ENCODE measurements at regions of chr12 and their contacts with region 1.

Region 1: GRCh38 chr12:118404876-118405521 is 28.6 kb downstream of the SUDS3 start:
- DNase-seq: peak; percentile 73
- H3K4me3 Mint-ChIP-seq: no peak overlapping the region
- H3K27ac Mint-ChIP-seq: no peak overlapping the region
- H3K4me1 Mint-ChIP-seq: no peaks in the 10 kb centered on the region
- H3K27me3 Mint-ChIP-seq: no peaks in the 10 kb centered on the region
- CTCF ChIP-seq: peak; percentile 79

Region 2: DNA sequence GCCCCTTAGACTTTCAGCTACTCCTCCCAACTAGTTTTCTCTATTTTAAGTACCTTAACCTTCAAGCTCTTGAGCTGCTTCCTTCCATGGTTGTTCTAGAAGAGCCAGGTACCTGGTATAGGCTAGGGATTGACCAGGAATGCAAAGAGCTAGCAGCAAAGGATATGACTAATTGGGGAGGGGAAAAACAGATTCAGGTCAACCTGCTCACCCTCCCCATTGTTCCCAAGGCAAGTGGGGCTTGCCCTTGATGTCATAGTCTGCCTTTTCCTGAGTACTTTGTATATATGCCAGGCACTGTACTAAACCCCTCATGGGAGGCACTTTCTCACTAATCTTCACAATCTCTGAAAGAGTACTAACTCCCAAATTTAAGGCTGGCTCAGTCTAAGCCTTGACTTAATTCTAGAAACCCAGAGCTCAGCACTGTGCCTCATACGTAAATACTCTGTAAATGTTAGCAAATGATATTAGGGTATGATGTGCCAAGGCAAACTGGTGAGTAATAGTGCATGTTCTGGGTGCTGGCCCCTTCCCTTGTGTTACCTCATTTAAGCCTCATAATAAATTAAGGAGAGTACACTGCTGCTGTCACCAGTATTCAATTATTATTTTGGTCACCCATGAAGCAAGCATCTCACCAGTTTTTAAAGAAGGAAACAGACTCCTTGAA is 13.5 kb after region 1 on chr12:
- CTCF ChIA-PET with region 1: interaction called, 15 read pairs
- POLR2A ChIA-PET with region 1: no interaction called
- intact Hi-C with region 1: no loop called
- DNase-seq: peak; percentile 50
- H3K4me3 Mint-ChIP-seq: no peak overlapping the region
- H3K27ac Mint-ChIP-seq: peak overlapping the region; percentile 49
- H3K4me1 Mint-ChIP-seq: peaks cover 15% of the 10 kb centered on the region
- H3K27me3 Mint-ChIP-seq: no peaks in the 10 kb centered on the region
- CTCF ChIP-seq: no peak

Region 3: GRCh38 chr12:118625050-118625675 is 220.2 kb after region 1 on chr12:
- CTCF ChIA-PET with region 1: interaction called, 4 read pairs
- POLR2A ChIA-PET with region 1: no interaction called
- intact Hi-C with region 1: loop called (anchors 1 kb)
- DNase-seq: no peak
- H3K4me3 Mint-ChIP-seq: no peak overlapping the region
- H3K27ac Mint-ChIP-seq: no peak overlapping the region
- H3K4me1 Mint-ChIP-seq: no peaks in the 10 kb centered on the region
- H3K27me3 Mint-ChIP-seq: no peaks in the 10 kb centered on the region
- CTCF ChIP-seq: no peak

Region 4: DNA sequence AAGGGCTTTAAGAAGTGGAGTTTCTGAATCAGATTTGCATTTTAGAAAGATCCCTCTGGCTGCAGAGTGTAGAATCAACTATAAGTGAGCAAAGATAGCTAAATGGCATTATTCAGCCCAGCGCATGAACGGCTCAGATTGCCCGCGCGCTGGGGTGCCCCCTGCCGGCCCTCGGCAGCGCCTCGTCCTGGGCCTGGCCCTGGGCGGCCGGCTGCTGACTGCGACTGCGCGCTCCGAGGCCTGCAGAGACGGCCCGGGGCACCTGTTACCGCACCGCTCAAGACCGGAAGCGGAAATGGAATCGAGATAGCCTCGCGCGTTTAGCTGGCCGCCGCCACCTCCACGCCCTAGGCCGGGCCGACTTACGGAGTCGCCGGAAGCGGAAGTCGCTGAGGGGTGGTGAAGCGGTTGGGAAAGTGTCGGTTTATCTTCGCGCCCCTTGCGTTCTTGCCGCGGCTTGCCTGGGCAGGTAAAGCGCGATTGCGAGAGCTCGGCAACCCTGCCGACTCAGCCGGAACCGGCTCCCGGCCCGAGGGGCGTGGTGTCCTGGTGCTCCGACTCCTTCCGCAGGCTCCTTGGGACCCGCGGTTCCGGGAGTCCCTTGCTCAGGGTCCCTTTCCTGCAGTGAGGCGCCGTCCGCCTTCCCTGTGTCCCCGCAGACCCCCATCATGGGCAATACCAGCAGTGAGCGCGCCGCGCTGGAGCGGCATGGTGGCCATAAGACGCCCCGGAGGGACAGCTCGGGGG is 1262.8 kb after region 1 on chr12 and contains the start of gene PRKAB1:
- CTCF ChIA-PET with region 1: interaction called, 7 read pairs
- POLR2A ChIA-PET with region 1: no interaction called
- intact Hi-C with region 1: loop called (anchors 10 kb)
- DNase-seq: peak; percentile 98
- H3K4me3 Mint-ChIP-seq: peak within 1 kb of the TSS; percentile 85
- H3K27ac Mint-ChIP-seq: peak within 1 kb of the TSS; percentile 86
- H3K4me1 Mint-ChIP-seq: peaks cover 19% of the 10 kb centered on the region
- H3K27me3 Mint-ChIP-seq: no peaks in the 10 kb centered on the region
- CTCF ChIP-seq: peak; percentile 86
- total RNA-seq, gene PRKAB1: 22.5 and 27.2 TPM in 2 replicates